CD8-positive, alpha-beta memory T cell (primary cell): ENCODE measurements at regions of chr1 and their contacts with region 1.

Region 1: DNA sequence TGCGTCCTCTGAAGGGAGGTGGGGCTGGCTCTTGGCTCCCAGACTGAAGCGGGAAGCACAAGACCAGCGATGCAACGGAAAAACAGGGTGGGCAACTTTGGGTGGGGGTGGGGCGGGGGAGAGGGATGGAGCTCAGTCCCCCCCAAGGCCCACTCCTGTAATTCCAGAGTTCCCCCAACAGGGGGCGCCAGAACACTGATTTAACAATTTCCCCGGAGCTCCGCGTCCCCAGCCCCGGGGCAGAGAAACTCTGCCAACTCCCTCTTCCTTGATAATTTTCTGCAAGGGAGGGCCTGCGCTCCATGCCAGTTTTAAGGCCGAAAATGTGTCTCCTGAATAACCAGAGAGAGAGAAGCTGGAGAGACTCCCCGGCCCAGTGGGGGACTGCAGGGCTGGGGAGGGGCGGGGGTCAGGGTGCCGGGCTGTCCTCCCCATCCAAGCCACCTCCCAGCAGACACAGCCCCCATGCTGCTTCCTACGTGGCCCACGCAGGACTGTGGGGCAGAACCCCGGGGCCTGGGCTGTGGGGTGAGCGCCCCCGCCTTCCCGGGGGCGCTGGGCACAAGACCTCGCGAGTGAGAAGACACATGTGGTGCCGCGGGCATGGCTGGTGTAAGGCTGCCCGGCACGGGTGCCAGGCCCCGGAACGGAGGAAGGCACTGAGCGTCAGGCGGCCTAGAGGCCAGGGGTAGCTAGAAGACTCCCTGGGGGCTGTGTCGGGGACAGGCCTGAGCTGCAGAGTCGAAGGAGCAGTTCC is 51.4 kb downstream of the KIF21B start:
- DNase-seq: peak; percentile 31 to 78 (median 51)
- H3K4me3 ChIP-seq: no peak overlapping the region
- H3K4me3 Mint-ChIP-seq: no peak overlapping the region
- H3K27ac ChIP-seq: no peak overlapping the region
- H3K27ac Mint-ChIP-seq: peak overlapping the region in 1 of 8 donors; percentile 58
- H3K4me1 ChIP-seq: no peaks in the 10 kb centered on the region
- H3K4me1 Mint-ChIP-seq: peaks cover 5 to 15% (median 8%) of the 10 kb centered on the region in 3 donors
- H3K27me3 ChIP-seq: no peaks in the 10 kb centered on the region
- H3K27me3 Mint-ChIP-seq: no peaks in the 10 kb centered on the region

Region 2: GRCh38 chr1:200620273-200621131 is 351.6 kb before region 1 on chr1 and contains the start of gene KIF14:
- CTCF ChIA-PET with region 1: interaction called, 10 read pairs
- POLR2A ChIA-PET with region 1: no interaction called
- DNase-seq: peak; percentile 89 to 95 (median 92)
- H3K4me3 ChIP-seq: peak within 1 kb of the TSS; percentile 87
- H3K4me3 Mint-ChIP-seq: peak within 1 kb of the TSS; percentile 91 to 98 (median 95)
- H3K27ac ChIP-seq: peak within 1 kb of the TSS; percentile 70
- H3K27ac Mint-ChIP-seq: peak within 1 kb of the TSS; percentile 67 to 96 (median 92)
- H3K4me1 ChIP-seq: peaks cover 4% of the 10 kb centered on the region
- H3K4me1 Mint-ChIP-seq: peaks cover 7 to 27% (median 20%) of the 10 kb centered on the region in 3 donors
- H3K27me3 ChIP-seq: no peaks in the 10 kb centered on the region
- H3K27me3 Mint-ChIP-seq: peaks cover 0 to 2% of the 10 kb centered on the region in 2 donors
- total RNA-seq, gene KIF14: 9.3 TPM

Region 3: DNA sequence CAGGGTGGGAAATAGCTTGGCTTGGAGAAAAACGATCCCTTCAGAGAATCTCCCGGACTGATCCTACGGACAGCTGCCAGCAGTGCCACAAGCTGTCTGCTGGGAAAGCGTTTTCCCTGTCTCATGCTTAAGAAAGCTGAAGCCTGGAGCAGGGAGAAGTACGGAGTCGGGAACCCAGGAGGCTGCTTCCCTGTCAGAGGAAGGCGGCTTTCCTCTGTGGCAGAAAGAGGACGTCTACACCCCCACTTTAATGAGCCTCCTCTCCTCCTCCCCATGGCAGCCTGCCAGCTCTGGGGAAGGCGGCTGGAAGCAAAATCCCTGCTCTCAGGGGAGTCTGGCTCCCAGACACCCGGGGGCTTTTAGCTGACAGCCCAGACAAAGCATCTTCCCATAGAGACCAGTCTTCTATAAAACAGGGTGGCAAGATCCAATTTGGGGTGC is 44.1 kb after region 1 on chr1:
- CTCF ChIA-PET with region 1: interaction called, 63 read pairs
- POLR2A ChIA-PET with region 1: interaction called, 3 read pairs
- DNase-seq: no peak
- H3K4me3 ChIP-seq: no peak overlapping the region
- H3K4me3 Mint-ChIP-seq: peak overlapping the region in 4 of 7 donors; percentile 10 to 83 (median 47)
- H3K27ac ChIP-seq: peak overlapping the region; percentile 20
- H3K27ac Mint-ChIP-seq: peak overlapping the region in 6 of 8 donors; percentile 71 to 90 (median 85)
- H3K4me1 ChIP-seq: peaks cover 99% of the 10 kb centered on the region
- H3K4me1 Mint-ChIP-seq: peaks cover 87 to 100% (median 95%) of the 10 kb centered on the region in 3 donors
- H3K27me3 ChIP-seq: no peaks in the 10 kb centered on the region
- H3K27me3 Mint-ChIP-seq: no peaks in the 10 kb centered on the region

Region 4: GRCh38 chr1:201036188-201036842 is 64.2 kb after region 1 on chr1:
- CTCF ChIA-PET with region 1: interaction called, 160 read pairs
- POLR2A ChIA-PET with region 1: no interaction called
- DNase-seq: no peak
- H3K4me3 ChIP-seq: no peak overlapping the region
- H3K4me3 Mint-ChIP-seq: no peak overlapping the region
- H3K27ac ChIP-seq: no peak overlapping the region
- H3K27ac Mint-ChIP-seq: no peak overlapping the region
- H3K4me1 ChIP-seq: no peaks in the 10 kb centered on the region
- H3K4me1 Mint-ChIP-seq: no peaks in the 10 kb centered on the region
- H3K27me3 ChIP-seq: no peaks in the 10 kb centered on the region
- H3K27me3 Mint-ChIP-seq: no peaks in the 10 kb centered on the region

Region 5: GRCh38 chr1:201059871-201060555 is 87.9 kb after region 1 on chr1:
- CTCF ChIA-PET with region 1: interaction called, 11 read pairs
- POLR2A ChIA-PET with region 1: no interaction called
- DNase-seq: no peak
- H3K4me3 ChIP-seq: no peak overlapping the region
- H3K4me3 Mint-ChIP-seq: no peak overlapping the region
- H3K27ac ChIP-seq: no peak overlapping the region
- H3K27ac Mint-ChIP-seq: peak overlapping the region in 1 of 8 donors; percentile 15
- H3K4me1 ChIP-seq: no peaks in the 10 kb centered on the region
- H3K4me1 Mint-ChIP-seq: peaks cover 0 to 6% (median 3%) of the 10 kb centered on the region in 3 donors
- H3K27me3 ChIP-seq: no peaks in the 10 kb centered on the region
- H3K27me3 Mint-ChIP-seq: no peaks in the 10 kb centered on the region